Aorta (tissue), 5 donors: ENCODE measurements at regions of chr11 and their contacts with region 1.

Region 1: DNA sequence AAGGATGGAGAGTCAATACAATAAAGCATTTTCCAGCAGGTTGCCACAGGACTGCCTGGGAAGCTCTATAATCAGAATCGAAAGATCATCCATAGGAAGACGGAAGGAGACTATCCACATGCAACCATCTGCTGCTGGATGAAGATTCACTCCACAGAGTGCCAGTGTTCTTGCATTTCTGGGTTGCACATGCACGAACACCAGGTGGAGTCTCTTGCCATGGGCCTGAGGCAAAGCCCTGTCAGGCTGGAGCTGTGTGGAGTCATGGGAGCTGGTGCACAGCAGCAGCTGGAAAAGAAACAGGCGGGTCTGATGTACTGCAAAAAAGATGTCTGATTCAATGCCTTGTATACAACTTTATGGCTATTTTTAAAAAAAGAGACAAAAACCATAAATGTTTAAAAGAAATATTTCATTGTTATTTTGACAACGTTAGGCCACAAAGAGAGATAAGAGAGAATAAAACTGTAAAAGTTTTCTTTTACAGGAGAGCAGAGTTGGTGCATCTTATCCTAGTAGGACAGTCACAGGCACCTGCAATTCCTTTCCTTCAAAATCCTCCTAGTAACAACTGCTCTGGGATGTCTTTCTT is 12.9 kb upstream of the FAT3 start:
- DNase-seq: peak in 1 of 2 donors; percentile 52
- ATAC-seq: no peak
- H3K4me3 ChIP-seq: no peak overlapping the region
- H3K27ac ChIP-seq: no peak overlapping the region
- H3K4me1 ChIP-seq: no peaks in the 10 kb centered on the region
- H3K27me3 ChIP-seq: no peaks in the 10 kb centered on the region

Region 2: GRCh38 chr11:92141159-92141558 is 70.5 kb before region 1 on chr11:
- intact Hi-C with region 1: no loop called
- DNase-seq: no peak
- ATAC-seq: no peak
- H3K4me3 ChIP-seq: no peak overlapping the region
- H3K27ac ChIP-seq: no peak overlapping the region
- H3K4me1 ChIP-seq: no peaks in the 10 kb centered on the region
- H3K27me3 ChIP-seq: no peaks in the 10 kb centered on the region

Region 3: DNA sequence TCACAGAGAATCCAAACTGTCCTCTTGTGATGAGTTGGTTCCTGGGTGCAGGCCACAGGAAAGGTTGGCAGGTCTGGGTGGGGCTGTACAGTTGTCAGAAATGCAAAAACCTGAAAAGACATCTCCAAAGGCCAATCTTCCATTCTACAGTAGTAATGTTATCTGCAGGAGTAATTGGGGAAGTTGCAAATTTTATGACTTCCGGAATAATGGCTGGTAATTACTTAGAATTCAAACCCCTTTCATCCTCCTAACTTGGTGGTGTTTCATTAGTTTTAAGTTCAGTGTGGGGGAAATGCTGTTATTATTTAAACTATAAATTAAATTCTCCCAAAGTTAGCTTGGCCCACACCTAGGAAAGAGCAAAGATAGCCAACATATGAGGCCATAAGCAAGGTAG is 51.7 kb before region 1 on chr11:
- intact Hi-C with region 1: no loop called
- DNase-seq: no peak
- ATAC-seq: no peak
- H3K4me3 ChIP-seq: no peak overlapping the region
- H3K27ac ChIP-seq: no peak overlapping the region
- H3K4me1 ChIP-seq: no peaks in the 10 kb centered on the region
- H3K27me3 ChIP-seq: no peaks in the 10 kb centered on the region

Region 4: GRCh38 chr11:92552942-92553341 is 341.3 kb after region 1 on chr11:
- intact Hi-C with region 1: loop called in 1 of 2 experiments (anchors 10 kb)
- DNase-seq: no peak
- ATAC-seq: no peak
- H3K4me3 ChIP-seq: no peak overlapping the region
- H3K27ac ChIP-seq: no peak overlapping the region
- H3K4me1 ChIP-seq: peaks cover 0 to 1% of the 10 kb centered on the region in 2 donors
- H3K27me3 ChIP-seq: no peaks in the 10 kb centered on the region

Region 5: GRCh38 chr11:92697461-92698312 is 486.0 kb after region 1 on chr11:
- intact Hi-C with region 1: no loop called
- DNase-seq: no peak
- ATAC-seq: no peak
- H3K4me3 ChIP-seq: no peak overlapping the region
- H3K27ac ChIP-seq: no peak overlapping the region
- H3K4me1 ChIP-seq: no peaks in the 10 kb centered on the region
- H3K27me3 ChIP-seq: no peaks in the 10 kb centered on the region

Region 6: GRCh38 chr11:92886243-92886905 is 674.7 kb after region 1 on chr11:
- intact Hi-C with region 1: loop called (anchors 5 kb)
- DNase-seq: no peak
- ATAC-seq: no peak
- H3K4me3 ChIP-seq: no peak overlapping the region
- H3K27ac ChIP-seq: no peak overlapping the region
- H3K4me1 ChIP-seq: no peaks in the 10 kb centered on the region
- H3K27me3 ChIP-seq: no peaks in the 10 kb centered on the region